ENCODE measurements at regions of chr15 and their contacts with region 1.

Region 1: GRCh38 chr15:89171136-89172072 is 50.0 kb downstream of the RLBP1 start:
- DNase-seq: peak; percentile 58
- H3K4me3 ChIP-seq: no peak overlapping the region
- H3K27ac ChIP-seq: no peak overlapping the region
- H3K4me1 ChIP-seq: peaks cover 20% of the 10 kb centered on the region
- H3K27me3 ChIP-seq: no peaks in the 10 kb centered on the region

Region 2: GRCh38 chr15:89057504-89058133 is 113.8 kb before region 1 on chr15:
- in situ Hi-C with region 1: loop called (anchors 5 kb)
- DNase-seq: peak; percentile 85
- H3K4me3 ChIP-seq: no peak overlapping the region
- H3K27ac ChIP-seq: no peak overlapping the region
- H3K4me1 ChIP-seq: peaks cover 7% of the 10 kb centered on the region
- H3K27me3 ChIP-seq: no peaks in the 10 kb centered on the region

Measured in GM23248 (cell line).